Testis (tissue), 5 donors: ENCODE measurements at regions of chr12 and their contacts with region 1.

Region 1: DNA sequence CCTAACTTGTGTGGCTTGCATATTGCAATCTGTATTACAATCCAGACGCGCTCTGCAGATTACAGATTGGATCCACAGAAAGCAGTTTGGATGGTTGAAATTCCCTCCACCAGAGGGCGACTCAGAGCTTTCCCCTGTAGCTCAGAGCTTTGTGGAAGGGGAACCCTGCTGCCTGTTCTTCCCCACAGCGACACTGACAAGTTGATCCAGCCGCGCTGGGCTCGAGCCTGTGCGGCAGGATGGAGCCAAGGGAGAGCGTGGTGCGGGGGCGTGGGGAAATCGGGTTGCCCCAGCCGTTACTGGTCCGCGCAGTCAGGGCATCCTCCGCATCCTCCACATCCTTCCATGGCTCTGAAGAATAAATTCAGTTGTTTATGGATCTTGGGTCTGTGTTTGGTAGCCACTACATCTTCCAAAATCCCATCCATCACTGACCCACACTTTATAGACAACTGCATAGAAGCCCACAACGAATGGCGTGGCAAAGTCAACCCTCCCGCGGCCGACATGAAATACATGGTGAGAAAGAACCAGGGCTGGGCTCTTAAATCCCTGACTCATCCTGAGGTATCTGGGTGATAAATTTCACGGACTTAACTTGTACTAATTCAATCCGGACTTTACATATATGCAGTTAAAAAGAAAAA is at the start of gene GLIPR1L1:
- DNase-seq: peak; percentile 94
- H3K4me3 ChIP-seq: peak within 1 kb of the TSS; percentile 24 to 41
- H3K27ac ChIP-seq: no peak within 1 kb of the TSS
- H3K4me1 ChIP-seq: peaks cover 3% of the 10 kb centered on the region
- H3K27me3 ChIP-seq: no peaks in the 10 kb centered on the region
- CTCF ChIP-seq: peak; percentile 81 to 85 (median 84)
- POLR2A ChIP-seq: no peak
- total RNA-seq, gene GLIPR1L1: 1.9 to 9.1 TPM

Region 2: GRCh38 chr12:75505706-75506312 is 171.3 kb after region 1 on chr12:
- intact Hi-C with region 1: loop called (anchors 10 kb)
- DNase-seq: no peak
- H3K4me3 ChIP-seq: no peak overlapping the region
- H3K27ac ChIP-seq: no peak overlapping the region
- H3K4me1 ChIP-seq: peaks cover 8% of the 10 kb centered on the region
- H3K27me3 ChIP-seq: no peaks in the 10 kb centered on the region
- CTCF ChIP-seq: peak in 2 of 3 experiments; percentile 13 to 53
- POLR2A ChIP-seq: no peak

Region 3: GRCh38 chr12:75553398-75553797 is 218.9 kb after region 1 on chr12:
- intact Hi-C with region 1: no loop called
- DNase-seq: no peak
- H3K4me3 ChIP-seq: no peak overlapping the region
- H3K27ac ChIP-seq: no peak overlapping the region
- H3K4me1 ChIP-seq: no peaks in the 10 kb centered on the region
- H3K27me3 ChIP-seq: no peaks in the 10 kb centered on the region
- CTCF ChIP-seq: no peak
- POLR2A ChIP-seq: no peak